ENCODE measurements at regions of chr11 and their contacts with region 1.

Region 1: DNA sequence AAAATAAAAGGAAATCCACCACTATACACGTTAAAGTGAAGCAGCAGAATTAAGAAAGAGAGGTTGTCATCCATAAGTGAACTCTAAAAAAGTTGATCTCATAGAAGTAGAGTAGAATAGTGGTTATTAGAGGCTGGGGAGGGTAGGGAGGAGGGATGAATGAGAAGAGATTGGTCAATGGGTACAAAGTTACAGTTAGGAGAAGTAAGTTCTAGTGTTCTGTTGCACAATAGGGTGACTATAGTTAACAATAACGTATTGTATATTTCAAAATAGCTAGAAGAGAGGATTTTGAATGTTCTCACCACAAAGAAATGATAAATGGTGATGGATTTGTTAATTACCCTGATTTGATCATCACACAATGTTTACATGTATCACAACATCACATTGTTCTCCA is 72.0 kb downstream of the CD82 start:
- DNase-seq: no peak
- H3K4me3 ChIP-seq: no peak overlapping the region
- H3K27ac ChIP-seq: no peak overlapping the region
- H3K4me1 ChIP-seq: peaks cover 0 to 28% (median 19%) of the 10 kb centered on the region in 4 donors
- H3K27me3 ChIP-seq: no peaks in the 10 kb centered on the region
- CTCF ChIP-seq: no peak
- EP300 ChIP-seq: no peak
- POLR2A ChIP-seq: no peak

Region 2: GRCh38 chr11:44400431-44400830 is 237.1 kb before region 1 on chr11:
- intact Hi-C with region 1: no loop called
- DNase-seq: no peak
- H3K4me3 ChIP-seq: no peak overlapping the region
- H3K27ac ChIP-seq: no peak overlapping the region
- H3K4me1 ChIP-seq: no peaks in the 10 kb centered on the region
- H3K27me3 ChIP-seq: peaks cover 0 to 13% (median 12%) of the 10 kb centered on the region in 3 donors
- CTCF ChIP-seq: no peak
- EP300 ChIP-seq: no peak
- POLR2A ChIP-seq: no peak

Region 3: GRCh38 chr11:44702889-44703288 is 65.4 kb after region 1 on chr11:
- intact Hi-C with region 1: loop called (anchors 2 kb)
- DNase-seq: peak; percentile 93
- H3K4me3 ChIP-seq: no peak overlapping the region
- H3K27ac ChIP-seq: peak overlapping the region in 3 of 4 donors; percentile 69 to 81 (median 74)
- H3K4me1 ChIP-seq: peaks cover 0 to 34% (median 33%) of the 10 kb centered on the region in 4 donors
- H3K27me3 ChIP-seq: no peaks in the 10 kb centered on the region
- CTCF ChIP-seq: no peak
- EP300 ChIP-seq: peak in 2 of 4 donors; percentile 22 to 34
- POLR2A ChIP-seq: no peak

Measured in sigmoid colon (tissue), 7 donors.